ENCODE measurements at regions of chr12 and their contacts with region 1.

Region 1: GRCh38 chr12:53065975-53066931 is 12.9 kb downstream of the SPRYD3 start:
- DNase-seq: peak; percentile 83
- H3K4me3 ChIP-seq: no peak overlapping the region
- H3K27ac ChIP-seq: peak overlapping the region; percentile 36 to 68 (median 52)
- H3K4me1 ChIP-seq: peaks cover 8 to 27% (median 10%) of the 10 kb centered on the region in 4 donors
- H3K27me3 ChIP-seq: no peaks in the 10 kb centered on the region
- CTCF ChIP-seq: peak; percentile 84 to 91 (median 89)
- EP300 ChIP-seq: no peak
- POLR2A ChIP-seq: no peak

Region 2: GRCh38 chr12:52980693-52981423 is 85.4 kb before region 1 on chr12:
- in situ Hi-C with region 1: no loop called
- intact Hi-C with region 1: no loop called
- DNase-seq: peak; percentile 93
- H3K4me3 ChIP-seq: no peak overlapping the region
- H3K27ac ChIP-seq: peak overlapping the region in 2 of 4 donors; percentile 4 to 51
- H3K4me1 ChIP-seq: peaks cover 0 to 6% (median 0%) of the 10 kb centered on the region in 4 donors
- H3K27me3 ChIP-seq: no peaks in the 10 kb centered on the region
- CTCF ChIP-seq: peak; percentile 91 to 100 (median 95)
- EP300 ChIP-seq: no peak
- POLR2A ChIP-seq: no peak

Region 3: GRCh38 chr12:53054112-53054833 is 12.0 kb before region 1 on chr12:
- in situ Hi-C with region 1: no loop called
- intact Hi-C with region 1: no loop called
- DNase-seq: peak; percentile 97
- H3K4me3 ChIP-seq: peak overlapping the region; percentile 18 to 57 (median 42)
- H3K27ac ChIP-seq: peak overlapping the region; percentile 89 to 98 (median 96)
- H3K4me1 ChIP-seq: peaks cover 22 to 61% (median 47%) of the 10 kb centered on the region in 4 donors
- H3K27me3 ChIP-seq: no peaks in the 10 kb centered on the region
- CTCF ChIP-seq: peak in 2 of 5 experiments; percentile 14
- EP300 ChIP-seq: no peak
- POLR2A ChIP-seq: peak; percentile 81

Region 4: GRCh38 chr12:53098982-53099651 is 32.9 kb after region 1 on chr12:
- in situ Hi-C with region 1: no loop called
- intact Hi-C with region 1: loop called (anchors 1 kb)
- DNase-seq: peak; percentile 89
- H3K4me3 ChIP-seq: peak overlapping the region in 1 of 4 donors; percentile 19
- H3K27ac ChIP-seq: peak overlapping the region; percentile 77 to 88 (median 84)
- H3K4me1 ChIP-seq: peaks cover 18 to 34% (median 23%) of the 10 kb centered on the region in 4 donors
- H3K27me3 ChIP-seq: peaks cover 28% of the 10 kb centered on the region
- CTCF ChIP-seq: peak; percentile 95 to 98 (median 97)
- EP300 ChIP-seq: no peak
- POLR2A ChIP-seq: no peak

Region 5: GRCh38 chr12:53180220-53180930 is 114.1 kb after region 1 on chr12 and contains the starts of genes CSAD and ZNF740:
- in situ Hi-C with region 1: loop called in 2 of 4 experiments (anchors 10 to 25 kb)
- intact Hi-C with region 1: no loop called
- DNase-seq: peak; percentile 98
- H3K4me3 ChIP-seq: peak within 1 kb of the TSS; percentile 72 to 90 (median 82)
- H3K27ac ChIP-seq: peak within 1 kb of the TSS; percentile 92 to 99 (median 96)
- H3K4me1 ChIP-seq: peaks cover 33 to 41% (median 36%) of the 10 kb centered on the region in 4 donors
- H3K27me3 ChIP-seq: no peaks in the 10 kb centered on the region
- CTCF ChIP-seq: no peak
- EP300 ChIP-seq: no peak
- POLR2A ChIP-seq: peak; percentile 85
- total RNA-seq, gene CSAD: 29.1 to 142 (median 39.2) TPM
- total RNA-seq, gene ZNF740: 9.7 to 21.9 (median 16.3) TPM

Region 6: DNA sequence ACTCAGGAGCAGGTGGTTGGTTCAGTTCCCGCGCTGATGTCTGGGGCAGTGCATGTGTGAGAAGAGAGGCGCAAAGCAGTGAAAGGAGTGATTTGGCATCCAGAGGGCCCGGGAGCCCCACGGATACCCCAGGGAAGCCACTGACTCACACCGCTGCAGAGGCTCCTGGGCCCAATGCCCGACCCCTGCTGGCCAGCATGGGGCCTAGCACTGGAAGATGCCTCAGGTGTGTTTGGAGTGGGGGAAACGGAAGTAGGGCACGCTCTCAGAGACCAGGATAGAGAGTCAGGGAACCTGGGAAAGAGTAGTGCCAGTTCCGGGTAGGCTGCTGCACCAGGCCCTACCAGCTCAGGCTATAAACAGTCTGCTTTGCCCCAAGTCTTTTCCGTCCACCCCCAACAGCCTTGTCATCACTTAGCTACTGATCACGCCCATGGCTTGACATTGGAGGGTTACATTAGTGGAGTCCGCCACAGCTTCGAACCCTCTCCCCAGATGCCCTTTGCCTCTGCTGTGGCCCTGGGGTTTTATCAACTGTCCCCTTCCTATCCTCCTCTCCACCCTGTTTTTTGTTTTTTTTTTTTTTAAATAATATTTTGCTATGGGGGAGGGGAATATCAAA is 124.0 kb after region 1 on chr12:
- in situ Hi-C with region 1: loop called in 2 of 4 experiments (anchors 10 to 25 kb)
- intact Hi-C with region 1: loop called (anchors 10 kb)
- DNase-seq: peak; percentile 44
- H3K4me3 ChIP-seq: no peak overlapping the region
- H3K27ac ChIP-seq: peak overlapping the region in 1 of 4 donors; percentile 6
- H3K4me1 ChIP-seq: peaks cover 0 to 6% (median 0%) of the 10 kb centered on the region in 4 donors
- H3K27me3 ChIP-seq: no peaks in the 10 kb centered on the region
- CTCF ChIP-seq: peak; percentile 67 to 78 (median 75)
- EP300 ChIP-seq: no peak
- POLR2A ChIP-seq: no peak

Region 7: GRCh38 chr12:53287741-53288216 is 221.5 kb after region 1 on chr12:
- in situ Hi-C with region 1: loop called in 1 of 4 experiments (anchors 25 kb)
- intact Hi-C with region 1: loop called (anchors 10 kb)
- DNase-seq: peak; percentile 79
- H3K4me3 ChIP-seq: no peak overlapping the region
- H3K27ac ChIP-seq: no peak overlapping the region
- H3K4me1 ChIP-seq: no peaks in the 10 kb centered on the region
- H3K27me3 ChIP-seq: no peaks in the 10 kb centered on the region
- CTCF ChIP-seq: peak; percentile 56 to 85 (median 63)
- EP300 ChIP-seq: no peak
- POLR2A ChIP-seq: no peak

Region 8: DNA sequence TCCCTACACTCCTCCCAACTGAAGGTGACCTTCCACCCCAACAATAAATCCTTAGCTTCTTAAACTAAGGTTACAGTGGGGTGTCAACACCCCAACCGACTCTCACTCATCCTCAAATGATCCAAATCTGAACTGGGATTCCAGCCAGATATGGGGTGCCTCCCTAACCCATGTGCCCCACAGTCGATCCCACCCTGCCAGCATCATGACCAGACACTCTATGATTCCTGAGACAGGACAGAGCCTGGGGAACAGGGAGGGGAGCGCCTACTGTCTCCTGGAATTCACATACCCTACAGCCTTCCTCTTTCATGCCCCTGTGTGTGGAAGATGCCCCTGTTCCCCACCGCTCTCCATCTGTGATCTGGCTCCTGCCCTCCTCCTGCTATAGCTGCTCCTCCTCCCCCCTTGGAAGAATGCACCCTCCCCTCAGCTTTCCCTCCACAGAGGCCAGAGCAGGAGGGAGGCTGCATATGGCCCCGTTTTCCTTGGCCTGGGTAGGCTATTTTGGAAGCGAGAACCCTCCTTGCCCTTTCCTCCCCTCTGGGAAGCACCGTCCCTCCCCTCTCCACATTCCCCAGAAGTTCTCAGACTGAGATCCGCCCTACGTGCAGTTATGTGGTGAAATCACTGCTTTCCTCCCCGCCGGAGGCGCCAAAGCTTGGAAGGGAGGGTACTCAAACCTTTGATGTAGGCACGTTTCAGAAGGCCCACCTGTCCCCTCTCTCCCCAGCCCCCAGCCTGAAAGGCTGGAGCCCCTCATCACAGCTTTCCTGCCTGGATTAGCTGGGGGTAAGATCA is 1074.5 kb after region 1 on chr12:
- in situ Hi-C with region 1: no loop called
- intact Hi-C with region 1: no loop called
- DNase-seq: no peak
- H3K4me3 ChIP-seq: no peak overlapping the region
- H3K27ac ChIP-seq: peak overlapping the region; percentile 59 to 74 (median 66)
- H3K4me1 ChIP-seq: peaks cover 0 to 10% (median 0%) of the 10 kb centered on the region in 4 donors
- H3K27me3 ChIP-seq: peaks cover 43% of the 10 kb centered on the region
- CTCF ChIP-seq: no peak
- EP300 ChIP-seq: no peak
- POLR2A ChIP-seq: no peak